ENCODE measurements at regions of chrX and their contacts with region 1.

Region 1: DNA sequence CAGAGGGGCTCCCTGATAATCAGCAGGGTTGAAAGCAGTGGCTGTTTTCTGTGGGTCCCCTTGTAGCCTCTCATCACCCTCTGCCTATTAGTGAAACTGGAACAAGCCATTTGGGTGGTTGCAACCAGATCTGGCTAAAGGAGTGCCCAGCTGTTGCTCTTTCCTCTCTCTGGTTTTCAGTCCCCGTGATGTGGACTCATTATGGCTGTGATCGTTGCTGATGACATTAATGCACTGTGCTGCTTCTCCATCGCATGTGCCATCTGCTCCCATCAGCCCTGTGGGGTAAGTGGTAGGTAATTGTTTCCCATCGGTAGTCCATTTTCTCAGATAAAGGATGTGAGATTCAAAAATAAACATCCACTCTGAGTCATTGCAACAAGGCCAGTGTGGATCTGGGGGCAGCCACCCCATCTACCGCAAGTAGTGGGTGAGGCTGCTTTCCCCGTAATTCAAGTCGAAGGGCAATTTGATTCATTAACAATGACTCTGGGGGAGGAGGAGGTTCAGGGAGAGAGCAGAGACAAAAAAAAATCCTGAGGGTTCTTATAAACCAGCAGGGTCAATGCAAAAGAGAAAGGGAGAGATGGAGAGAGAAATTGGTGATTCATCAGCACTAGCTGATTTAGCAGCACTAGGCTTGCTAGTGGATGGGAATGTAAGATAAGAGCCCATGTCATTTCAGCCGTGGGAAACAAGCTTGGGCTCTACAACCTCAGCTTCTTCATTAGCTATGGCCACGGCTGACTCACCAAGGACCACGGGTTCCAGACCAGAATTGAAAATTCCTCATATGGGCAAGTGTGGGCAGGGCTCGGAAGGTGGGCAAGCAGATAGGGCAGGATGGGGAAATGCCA is 357.8 kb downstream of the MID1IP1 start:
- DNase-seq: peak; percentile 67
- ATAC-seq: peak; percentile 76
- H3K4me3 ChIP-seq: no peak overlapping the region
- H3K27ac ChIP-seq: peak overlapping the region; percentile 43; the same call in 1 of the 2 replicates
- H3K4me1 ChIP-seq: peaks cover 8% of the 10 kb centered on the region; the same call in 1 of the 2 replicates
- H3K27me3 ChIP-seq: no peaks in the 10 kb centered on the region
- CTCF ChIP-seq: no peak
- EP300 ChIP-seq: no peak
- POLR2A ChIP-seq: no peak
- RAD21 ChIP-seq: no peak

Region 2: GRCh38 chrX:39096599-39096998 is 62.4 kb before region 1 on chrX:
- CTCF ChIA-PET with region 1: no interaction called
- POLR2A ChIA-PET with region 1: no interaction called
- RAD21 ChIA-PET with region 1: no interaction called
- SMC1A ChIA-PET with region 1: no interaction called
- in situ Hi-C with region 1: no loop called
- intact Hi-C with region 1: no loop called
- DNase-seq: no peak
- ATAC-seq: no peak
- H3K4me3 ChIP-seq: no peak overlapping the region
- H3K27ac ChIP-seq: no peak overlapping the region
- H3K4me1 ChIP-seq: no peaks in the 10 kb centered on the region
- H3K27me3 ChIP-seq: no peaks in the 10 kb centered on the region
- CTCF ChIP-seq: no peak
- EP300 ChIP-seq: no peak
- POLR2A ChIP-seq: no peak
- RAD21 ChIP-seq: no peak

Region 3: GRCh38 chrX:39214387-39215126 is 55.5 kb after region 1 on chrX:
- CTCF ChIA-PET with region 1: no interaction called
- POLR2A ChIA-PET with region 1: no interaction called
- RAD21 ChIA-PET with region 1: no interaction called
- SMC1A ChIA-PET with region 1: no interaction called
- in situ Hi-C with region 1: no loop called
- intact Hi-C with region 1: no loop called
- DNase-seq: no peak
- ATAC-seq: no peak
- H3K4me3 ChIP-seq: no peak overlapping the region
- H3K27ac ChIP-seq: no peak overlapping the region
- H3K4me1 ChIP-seq: no peaks in the 10 kb centered on the region
- H3K27me3 ChIP-seq: peaks cover 0 to 2% of the 10 kb centered on the region in 2 experiments; a peak in 1 of 4 replicates
- CTCF ChIP-seq: no peak
- EP300 ChIP-seq: no peak
- POLR2A ChIP-seq: no peak
- RAD21 ChIP-seq: no peak

Region 4: DNA sequence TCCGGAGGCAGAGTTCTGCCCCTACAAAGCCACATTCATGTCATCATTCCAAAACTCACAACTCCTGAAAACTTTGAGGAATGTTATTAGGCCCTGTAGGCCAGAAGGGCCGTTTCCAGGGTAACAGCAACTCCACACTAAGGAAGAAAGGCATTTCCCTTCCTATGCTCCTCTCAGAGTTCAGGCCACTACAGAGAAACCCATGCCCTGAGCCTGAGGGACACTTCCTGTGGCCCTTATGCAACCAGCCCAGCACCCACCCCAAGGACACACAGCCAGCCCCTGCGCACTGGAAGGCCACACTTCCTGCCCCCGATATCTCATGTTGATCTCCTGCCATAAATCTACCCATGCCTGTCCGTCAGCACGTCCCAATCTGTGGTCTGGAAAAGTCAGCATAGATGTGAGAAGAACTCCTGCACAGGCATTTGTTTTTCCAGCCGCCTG is 649.5 kb after region 1 on chrX:
- CTCF ChIA-PET with region 1: no interaction called
- POLR2A ChIA-PET with region 1: interaction called, 10 read pairs
- RAD21 ChIA-PET with region 1: no interaction called
- SMC1A ChIA-PET with region 1: no interaction called
- in situ Hi-C with region 1: no loop called
- intact Hi-C with region 1: no loop called
- DNase-seq: no peak
- ATAC-seq: no peak
- H3K4me3 ChIP-seq: no peak overlapping the region
- H3K27ac ChIP-seq: no peak overlapping the region
- H3K4me1 ChIP-seq: no peaks in the 10 kb centered on the region
- H3K27me3 ChIP-seq: no peaks in the 10 kb centered on the region; a peak in 2 of 4 replicates
- CTCF ChIP-seq: no peak
- EP300 ChIP-seq: no peak
- POLR2A ChIP-seq: no peak
- RAD21 ChIP-seq: no peak